Activated CD4-positive, alpha-beta T cell treated with anti-CD3 and anti-CD28 coated beads, Interleukin-2, amount 10 ng/mL, durations not matched to agents 7 days and 5 days (primary cell): ENCODE measurements at regions of chr3 and their contacts with region 1.

Region 1: DNA sequence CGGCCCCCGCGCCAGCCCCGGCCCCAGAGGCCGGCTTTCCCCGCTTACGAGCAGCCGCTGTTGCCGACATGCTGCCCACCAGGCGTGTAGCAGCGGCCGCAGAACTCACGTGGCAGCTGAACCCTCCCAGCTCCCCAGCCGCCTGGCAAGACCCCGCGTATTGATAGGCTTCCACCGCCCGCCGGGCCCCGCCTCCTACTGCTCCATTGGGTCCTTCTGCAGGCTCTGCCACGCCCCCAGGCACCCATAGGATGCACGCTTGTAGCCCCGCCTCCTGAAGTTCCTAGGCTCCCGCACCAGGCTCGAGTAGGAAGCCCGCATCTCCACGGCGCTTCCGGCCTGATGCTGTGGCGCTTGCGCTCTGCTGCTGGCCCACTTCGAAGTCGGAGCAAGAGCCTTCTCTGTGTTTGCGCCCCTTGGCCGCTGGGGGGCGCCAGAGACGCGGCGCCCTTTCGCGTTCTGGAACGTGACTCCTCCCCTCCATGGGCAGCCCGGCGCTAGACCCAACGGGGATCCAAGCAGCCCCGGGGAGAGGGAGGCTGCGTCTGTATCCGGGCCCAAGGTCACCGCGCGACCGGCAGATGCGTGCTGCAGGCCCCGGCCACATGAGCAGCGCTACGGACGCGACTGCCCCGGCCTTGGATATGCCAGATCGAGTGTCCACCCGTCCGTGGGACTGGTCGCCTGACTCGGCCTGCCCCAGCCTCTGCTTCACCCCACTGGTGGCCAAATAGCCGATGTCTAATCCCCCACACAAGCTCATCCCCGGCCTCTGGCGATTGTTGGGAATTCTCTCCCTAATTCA is at the starts of genes PARP3 and RRP9:
- DNase-seq: peak; percentile 100
- H3K4me3 Mint-ChIP-seq: peak within 1 kb of the TSS; percentile 92
- H3K27ac Mint-ChIP-seq: peak within 1 kb of the TSS; percentile 92
- H3K4me1 Mint-ChIP-seq: peaks cover 45% of the 10 kb centered on the region
- H3K27me3 Mint-ChIP-seq: no peaks in the 10 kb centered on the region
- total RNA-seq, gene PARP3: 22.1 to 22.9 TPM
- total RNA-seq, gene RRP9: 24.3 to 25.1 TPM

Region 2: GRCh38 chr3:51955893-51956770 is 14.1 kb after region 1 on chr3:
- CTCF ChIA-PET with region 1: interaction called, 46 read pairs
- POLR2A ChIA-PET with region 1: no interaction called
- DNase-seq: peak; percentile 27
- H3K4me3 Mint-ChIP-seq: peak overlapping the region; percentile 13
- H3K27ac Mint-ChIP-seq: no peak overlapping the region
- H3K4me1 Mint-ChIP-seq: peaks cover 11% of the 10 kb centered on the region
- H3K27me3 Mint-ChIP-seq: peaks cover 34% of the 10 kb centered on the region

Region 3: GRCh38 chr3:51982782-51983577 is 41.0 kb after region 1 on chr3 and contains the start of gene ACY1:
- CTCF ChIA-PET with region 1: interaction called, 20 read pairs
- POLR2A ChIA-PET with region 1: no interaction called
- DNase-seq: peak; percentile 74
- H3K4me3 Mint-ChIP-seq: peak within 1 kb of the TSS; percentile 91
- H3K27ac Mint-ChIP-seq: peak within 1 kb of the TSS; percentile 88
- H3K4me1 Mint-ChIP-seq: peaks cover 29% of the 10 kb centered on the region
- H3K27me3 Mint-ChIP-seq: no peaks in the 10 kb centered on the region
- total RNA-seq, gene ACY1: 16.5 to 19.4 TPM